Activated T-helper 1 cell treated with anti-CD3 and anti-CD28 coated beads, Interleukin-12 subunit alpha, Interleukin-12 subunit beta, Interleukin-2, Interleukin-4 antibody, amounts not matched to agents 30 ng/mL and 10 ng/mL and 1 ng/mL, durations not matched to agents 14 hours and 24 hours and 36 hours (primary cell): ENCODE measurements at regions of chr12 and their contacts with region 1.

Region 1: DNA sequence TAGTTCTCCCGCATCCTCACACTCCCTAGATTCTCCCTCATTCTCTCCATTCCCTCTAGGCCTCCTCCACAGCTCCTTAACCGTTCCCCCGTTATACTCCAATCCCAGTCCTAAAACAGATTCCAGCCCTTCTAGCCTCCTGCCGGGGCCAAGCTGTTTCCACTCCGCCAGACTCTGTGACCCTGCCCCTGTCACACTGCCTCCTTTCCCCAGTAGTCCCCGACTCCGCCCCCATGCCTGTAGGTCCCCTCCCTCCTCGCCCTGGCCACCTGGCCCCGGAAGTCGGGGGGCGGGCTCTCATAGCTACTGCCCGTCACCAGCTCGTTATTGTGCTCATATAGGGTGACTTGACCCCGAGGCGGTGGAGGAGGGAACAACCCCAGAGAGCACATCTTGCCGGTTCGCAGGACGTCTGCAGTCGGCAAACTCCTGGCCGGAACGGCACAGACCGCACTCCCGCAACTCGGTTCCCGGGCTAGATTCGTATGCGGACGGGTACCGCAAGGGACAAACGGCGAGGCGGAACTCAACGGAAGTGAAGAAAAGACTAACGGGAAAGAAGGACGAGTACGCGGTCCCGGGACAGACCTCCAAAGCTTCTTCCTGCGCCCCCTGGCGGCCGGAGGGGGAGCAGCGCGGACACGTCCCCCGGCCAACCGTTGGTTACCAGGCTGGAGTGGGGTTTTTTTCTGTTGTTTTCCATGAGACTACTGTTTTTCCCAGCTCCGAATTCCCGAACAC is at the start of gene AAAS:
- DNase-seq: peak; percentile 95
- H3K4me3 Mint-ChIP-seq: peak within 1 kb of the TSS; percentile 96
- H3K27ac Mint-ChIP-seq: peak within 1 kb of the TSS; percentile 97
- H3K4me1 Mint-ChIP-seq: peaks cover 41% of the 10 kb centered on the region
- H3K27me3 Mint-ChIP-seq: peaks cover 2% of the 10 kb centered on the region
- total RNA-seq, gene AAAS: 81.4 and 85.7 TPM in 2 replicates

Region 2: GRCh38 chr12:53159195-53159839 is 161.9 kb before region 1 on chr12:
- intact Hi-C with region 1: loop called (anchors 1 kb)
- DNase-seq: peak; percentile 83
- H3K4me3 Mint-ChIP-seq: no peak overlapping the region
- H3K27ac Mint-ChIP-seq: peak overlapping the region; percentile 50
- H3K4me1 Mint-ChIP-seq: peaks cover 10% of the 10 kb centered on the region
- H3K27me3 Mint-ChIP-seq: no peaks in the 10 kb centered on the region

Region 3: GRCh38 chr12:53220801-53221202 is 100.4 kb before region 1 on chr12:
- intact Hi-C with region 1: loop called (anchors 1 kb)
- DNase-seq: peak; percentile 83
- H3K4me3 Mint-ChIP-seq: peak overlapping the region; percentile 94
- H3K27ac Mint-ChIP-seq: peak overlapping the region; percentile 98
- H3K4me1 Mint-ChIP-seq: peaks cover 83% of the 10 kb centered on the region
- H3K27me3 Mint-ChIP-seq: peaks cover 2% of the 10 kb centered on the region

Region 4: GRCh38 chr12:53295070-53295890 is 26.0 kb before region 1 on chr12 and contains the start of gene PFDN5:
- intact Hi-C with region 1: loop called (anchors 1 kb)
- DNase-seq: peak; percentile 86
- H3K4me3 Mint-ChIP-seq: peak within 1 kb of the TSS; percentile 99
- H3K27ac Mint-ChIP-seq: peak within 1 kb of the TSS; percentile 91
- H3K4me1 Mint-ChIP-seq: peaks cover 50% of the 10 kb centered on the region
- H3K27me3 Mint-ChIP-seq: no peaks in the 10 kb centered on the region
- total RNA-seq, gene PFDN5: 344 and 350 TPM in 2 replicates

Region 5: GRCh38 chr12:53336181-53336681 is 15.0 kb after region 1 on chr12 and contains the start of gene SP7:
- intact Hi-C with region 1: no loop called
- DNase-seq: no peak
- H3K4me3 Mint-ChIP-seq: no peak within 1 kb of the TSS
- H3K27ac Mint-ChIP-seq: no peak within 1 kb of the TSS
- H3K4me1 Mint-ChIP-seq: peaks cover 12% of the 10 kb centered on the region
- H3K27me3 Mint-ChIP-seq: peaks cover 51% of the 10 kb centered on the region
- total RNA-seq, gene SP7: not detected in 2 replicates

Region 6: GRCh38 chr12:53352331-53353256 is 31.4 kb after region 1 on chr12:
- intact Hi-C with region 1: no loop called
- DNase-seq: peak; percentile 78
- H3K4me3 Mint-ChIP-seq: no peak overlapping the region
- H3K27ac Mint-ChIP-seq: peak overlapping the region; percentile 47
- H3K4me1 Mint-ChIP-seq: peaks cover 10% of the 10 kb centered on the region
- H3K27me3 Mint-ChIP-seq: no peaks in the 10 kb centered on the region

Region 7: GRCh38 chr12:53441040-53441833 is 120.0 kb after region 1 on chr12 and contains the start of gene PRR13:
- intact Hi-C with region 1: loop called (anchors 1 kb)
- DNase-seq: peak; percentile 96
- H3K4me3 Mint-ChIP-seq: peak within 1 kb of the TSS; percentile 89
- H3K27ac Mint-ChIP-seq: peak within 1 kb of the TSS; percentile 86
- H3K4me1 Mint-ChIP-seq: peaks cover 35% of the 10 kb centered on the region
- H3K27me3 Mint-ChIP-seq: no peaks in the 10 kb centered on the region
- total RNA-seq, gene PRR13: 206 and 219 TPM in 2 replicates

Region 8: GRCh38 chr12:53508534-53509199 is 187.4 kb after region 1 on chr12:
- intact Hi-C with region 1: loop called (anchors 2 kb)
- DNase-seq: peak; percentile 79
- H3K4me3 Mint-ChIP-seq: no peak overlapping the region
- H3K27ac Mint-ChIP-seq: peak overlapping the region; percentile 25
- H3K4me1 Mint-ChIP-seq: peaks cover 20% of the 10 kb centered on the region
- H3K27me3 Mint-ChIP-seq: no peaks in the 10 kb centered on the region